ENCODE measurements at regions of chr6 and their contacts with region 1.

Region 1: DNA sequence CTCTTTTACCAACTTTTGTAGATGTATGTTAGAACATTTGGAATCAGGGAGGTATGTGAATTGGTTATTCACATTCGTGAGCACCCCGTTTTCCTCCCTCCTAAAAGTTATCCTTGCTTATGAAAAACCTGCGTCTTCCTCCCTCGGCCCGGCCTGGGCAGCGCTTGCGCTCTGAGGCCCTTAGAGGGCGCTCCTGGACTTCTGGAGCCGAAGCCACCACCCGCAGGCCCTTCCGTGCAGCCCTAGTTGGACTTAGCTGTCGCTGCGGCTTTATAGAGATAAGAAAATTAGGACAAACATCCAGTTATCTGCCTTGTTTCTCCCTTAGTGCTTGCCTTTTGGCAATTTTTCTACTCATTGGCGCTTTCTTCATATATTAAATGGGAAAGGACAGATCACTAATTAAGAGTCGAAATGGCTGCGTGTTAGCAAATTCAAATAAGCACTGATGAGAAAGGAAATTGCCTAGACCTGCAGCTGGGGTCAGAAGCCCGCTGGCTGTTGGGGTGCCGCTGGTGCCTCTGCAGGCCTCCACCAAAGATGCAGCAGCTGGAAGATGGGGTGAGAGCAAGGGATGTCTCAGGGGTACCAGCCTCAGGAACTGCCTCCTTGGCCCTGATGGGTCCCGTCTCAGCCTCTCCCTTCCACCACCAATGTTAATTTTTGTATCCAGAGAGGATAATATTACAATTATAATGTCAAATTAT is 5.2 kb downstream of the FNDC1 start:
- DNase-seq: peak; percentile 69
- H3K4me3 Mint-ChIP-seq: no peak overlapping the region
- H3K27ac Mint-ChIP-seq: no peak overlapping the region
- H3K4me1 Mint-ChIP-seq: peaks cover 8% of the 10 kb centered on the region
- H3K27me3 Mint-ChIP-seq: peaks cover 51% of the 10 kb centered on the region
- CTCF ChIP-seq: peak; percentile 96

Region 2: GRCh38 chr6:159134701-159135364 is 39.6 kb before region 1 on chr6:
- CTCF ChIA-PET with region 1: no interaction called
- POLR2A ChIA-PET with region 1: no interaction called
- intact Hi-C with region 1: no loop called
- DNase-seq: peak; percentile 73
- H3K4me3 Mint-ChIP-seq: no peak overlapping the region
- H3K27ac Mint-ChIP-seq: no peak overlapping the region
- H3K4me1 Mint-ChIP-seq: peaks cover 5% of the 10 kb centered on the region
- H3K27me3 Mint-ChIP-seq: peaks cover 42% of the 10 kb centered on the region
- CTCF ChIP-seq: peak; percentile 95

Region 3: GRCh38 chr6:159161839-159162238 is 12.6 kb before region 1 on chr6:
- CTCF ChIA-PET with region 1: interaction called, 10 read pairs
- POLR2A ChIA-PET with region 1: interaction called, 3 read pairs
- intact Hi-C with region 1: no loop called
- DNase-seq: no peak
- H3K4me3 Mint-ChIP-seq: no peak overlapping the region
- H3K27ac Mint-ChIP-seq: no peak overlapping the region
- H3K4me1 Mint-ChIP-seq: no peaks in the 10 kb centered on the region
- H3K27me3 Mint-ChIP-seq: peaks cover 25% of the 10 kb centered on the region
- CTCF ChIP-seq: no peak

Region 4: GRCh38 chr6:159463119-159463829 is 288.9 kb after region 1 on chr6:
- CTCF ChIA-PET with region 1: interaction called, 8 read pairs
- POLR2A ChIA-PET with region 1: no interaction called
- intact Hi-C with region 1: loop called (anchors 1 kb)
- DNase-seq: peak; percentile 49
- H3K4me3 Mint-ChIP-seq: no peak overlapping the region
- H3K27ac Mint-ChIP-seq: no peak overlapping the region
- H3K4me1 Mint-ChIP-seq: peaks cover 6% of the 10 kb centered on the region
- H3K27me3 Mint-ChIP-seq: peaks cover 18% of the 10 kb centered on the region
- CTCF ChIP-seq: peak; percentile 38

Region 5: DNA sequence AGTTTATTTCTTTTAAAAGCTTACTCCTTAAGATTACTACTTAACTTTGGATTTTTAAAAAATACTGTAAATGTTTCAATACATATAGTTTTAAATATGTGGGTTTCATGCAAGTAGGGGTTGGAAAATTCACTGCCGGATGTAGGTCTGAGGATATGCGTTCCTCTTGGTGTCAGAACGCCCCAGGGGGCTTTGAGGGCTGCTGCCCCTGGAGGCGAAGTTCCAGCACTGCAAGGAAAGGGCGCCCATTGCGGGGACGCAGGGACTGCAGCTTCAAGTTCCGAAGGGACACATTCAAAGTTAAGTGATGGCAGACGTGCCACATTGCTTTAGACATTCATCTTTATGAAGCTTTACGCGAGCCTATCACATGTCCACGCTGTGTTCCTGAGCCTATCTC is 365.7 kb after region 1 on chr6:
- CTCF ChIA-PET with region 1: no interaction called
- POLR2A ChIA-PET with region 1: no interaction called
- intact Hi-C with region 1: no loop called
- DNase-seq: no peak
- H3K4me3 Mint-ChIP-seq: no peak overlapping the region
- H3K27ac Mint-ChIP-seq: no peak overlapping the region
- H3K4me1 Mint-ChIP-seq: no peaks in the 10 kb centered on the region
- H3K27me3 Mint-ChIP-seq: peaks cover 35% of the 10 kb centered on the region
- CTCF ChIP-seq: no peak

Region 6: GRCh38 chr6:159608961-159609651 is 434.7 kb after region 1 on chr6:
- CTCF ChIA-PET with region 1: interaction called, 30 read pairs
- POLR2A ChIA-PET with region 1: no interaction called
- intact Hi-C with region 1: loop called (anchors 1 kb)
- DNase-seq: peak; percentile 66
- H3K4me3 Mint-ChIP-seq: no peak overlapping the region
- H3K27ac Mint-ChIP-seq: no peak overlapping the region
- H3K4me1 Mint-ChIP-seq: no peaks in the 10 kb centered on the region
- H3K27me3 Mint-ChIP-seq: no peaks in the 10 kb centered on the region
- CTCF ChIP-seq: peak; percentile 92

Region 7: DNA sequence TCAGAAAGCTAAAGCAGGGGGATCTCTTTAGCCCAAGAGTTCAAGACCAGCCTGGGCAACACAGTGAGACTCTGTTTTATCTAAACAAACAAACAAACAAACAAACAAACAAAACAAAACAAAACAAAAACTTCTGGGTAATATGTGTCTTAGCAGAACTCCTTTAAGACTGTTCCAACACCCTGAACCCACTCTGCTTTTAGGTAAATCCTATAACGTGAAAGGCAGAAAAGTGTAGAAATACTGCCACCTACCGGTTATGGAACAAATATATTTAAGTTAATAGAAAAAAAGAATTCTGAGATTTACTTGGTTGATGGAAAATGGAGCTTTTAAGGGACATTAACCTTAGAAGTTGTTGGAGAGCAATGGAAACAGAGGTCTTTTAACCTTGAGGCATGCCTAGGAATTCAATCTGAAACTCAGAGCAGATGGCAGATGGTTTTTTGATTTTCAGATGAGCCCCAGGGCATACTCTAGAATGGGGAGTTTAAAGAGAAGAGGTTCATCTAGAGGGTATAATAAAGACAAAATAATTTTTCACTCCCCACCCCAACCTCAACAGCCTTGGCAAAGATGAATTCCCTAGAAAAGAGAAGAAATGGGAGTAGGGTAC is 480.2 kb after region 1 on chr6:
- CTCF ChIA-PET with region 1: interaction called, 72 read pairs
- POLR2A ChIA-PET with region 1: interaction called, 3 read pairs
- intact Hi-C with region 1: loop called (anchors 2 kb)
- DNase-seq: peak; percentile 71
- H3K4me3 Mint-ChIP-seq: no peak overlapping the region
- H3K27ac Mint-ChIP-seq: no peak overlapping the region
- H3K4me1 Mint-ChIP-seq: peaks cover 5% of the 10 kb centered on the region
- H3K27me3 Mint-ChIP-seq: no peaks in the 10 kb centered on the region
- CTCF ChIP-seq: peak; percentile 54

Measured in MCF 10A (cell line).